Right ventricle myocardium superior (tissue), 1 donor: ENCODE measurements at regions of chr16 and their contacts with region 1.

Region 1: DNA sequence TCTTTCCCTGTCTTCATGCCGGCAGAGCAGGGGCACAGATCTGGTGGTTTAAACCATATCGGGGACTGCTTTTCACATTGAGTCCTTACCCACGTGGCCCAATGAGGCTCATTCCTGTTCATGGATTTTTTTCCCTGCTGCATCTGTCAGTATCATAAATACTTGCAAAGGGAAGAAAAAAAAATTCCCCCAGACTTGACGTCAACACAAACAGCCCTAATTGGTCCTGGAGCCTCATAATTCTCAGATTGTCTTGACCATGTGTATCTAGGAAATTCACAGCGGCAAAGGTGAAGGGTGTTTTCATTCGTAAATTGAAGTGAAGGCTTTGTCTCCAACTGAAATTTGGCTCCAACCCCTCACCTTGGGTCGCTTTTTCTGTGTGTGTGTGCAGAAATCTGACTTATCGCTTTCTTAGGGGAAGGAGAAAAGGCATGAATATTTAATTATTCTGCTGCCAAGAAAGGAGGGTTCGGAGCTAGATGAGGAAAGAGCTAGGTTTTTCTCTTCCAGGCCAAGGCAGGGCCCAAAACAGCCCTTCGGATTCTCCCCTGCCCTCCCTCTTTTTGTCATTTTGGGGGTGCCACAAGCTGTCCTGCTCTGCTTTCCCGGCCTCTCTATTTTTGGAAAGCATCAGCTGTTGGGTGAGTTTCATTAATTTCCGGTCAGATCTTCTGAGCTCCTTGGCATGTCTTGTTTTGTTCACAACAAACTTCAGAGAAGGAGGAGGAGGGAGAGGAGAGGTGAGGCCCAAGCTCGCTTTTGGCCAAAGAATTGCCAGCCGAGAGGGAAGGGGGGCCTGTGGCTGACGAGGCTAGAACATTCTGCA is 17.8 kb upstream of the CIBAR2 start:
- DNase-seq: no peak
- ATAC-seq: peak; percentile 3

Region 2: GRCh38 chr16:85168732-85169256 is 38.7 kb after region 1 on chr16:
- intact Hi-C with region 1: loop called (anchors 5 kb)
- DNase-seq: peak; percentile 80
- ATAC-seq: peak; percentile 39

Region 3: DNA sequence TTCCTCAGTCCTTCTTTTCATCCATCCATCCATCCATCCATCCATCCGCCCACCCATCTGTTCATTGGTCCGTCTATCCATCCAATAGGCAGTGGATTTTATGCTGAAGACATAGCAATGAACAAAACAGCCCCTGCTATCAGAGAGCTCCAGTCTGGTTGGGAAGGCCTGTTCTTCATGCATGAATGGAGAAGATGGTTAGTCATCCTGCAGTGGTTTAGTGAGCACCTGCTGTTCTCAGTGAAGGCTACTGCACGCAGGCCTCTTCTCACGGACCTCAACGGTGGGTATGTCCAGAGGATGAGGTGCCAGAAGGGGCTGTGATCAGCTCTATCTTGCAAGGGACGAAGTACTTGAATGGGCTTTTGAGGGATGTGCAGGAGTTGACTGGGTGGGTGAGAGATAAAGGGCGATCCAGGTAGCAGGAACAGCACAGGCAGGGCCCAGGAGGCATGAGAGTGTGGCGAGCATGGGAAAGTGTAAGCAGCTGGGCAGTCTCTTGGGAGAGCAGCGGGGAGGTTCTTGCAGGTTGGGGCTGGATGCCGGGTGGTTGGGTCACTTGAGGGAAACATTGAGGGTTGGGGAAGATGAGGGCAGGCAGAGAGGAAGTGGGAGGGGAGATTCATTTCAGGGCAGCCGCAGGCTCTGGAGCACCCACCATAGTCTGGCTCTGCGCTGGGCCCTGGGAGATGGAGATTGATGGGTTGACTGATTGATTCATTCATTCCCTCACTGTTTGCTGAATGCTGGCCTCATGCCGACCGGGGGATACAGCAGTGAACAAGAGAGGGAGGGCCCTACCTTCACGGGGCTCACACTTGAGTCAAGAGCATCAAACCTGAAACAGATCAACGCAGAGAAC is 97.2 kb after region 1 on chr16:
- intact Hi-C with region 1: loop called (anchors 5 kb)
- DNase-seq: no peak
- ATAC-seq: no peak